ENCODE measurements at regions of chr15 and their contacts with region 1.

Region 1: DNA sequence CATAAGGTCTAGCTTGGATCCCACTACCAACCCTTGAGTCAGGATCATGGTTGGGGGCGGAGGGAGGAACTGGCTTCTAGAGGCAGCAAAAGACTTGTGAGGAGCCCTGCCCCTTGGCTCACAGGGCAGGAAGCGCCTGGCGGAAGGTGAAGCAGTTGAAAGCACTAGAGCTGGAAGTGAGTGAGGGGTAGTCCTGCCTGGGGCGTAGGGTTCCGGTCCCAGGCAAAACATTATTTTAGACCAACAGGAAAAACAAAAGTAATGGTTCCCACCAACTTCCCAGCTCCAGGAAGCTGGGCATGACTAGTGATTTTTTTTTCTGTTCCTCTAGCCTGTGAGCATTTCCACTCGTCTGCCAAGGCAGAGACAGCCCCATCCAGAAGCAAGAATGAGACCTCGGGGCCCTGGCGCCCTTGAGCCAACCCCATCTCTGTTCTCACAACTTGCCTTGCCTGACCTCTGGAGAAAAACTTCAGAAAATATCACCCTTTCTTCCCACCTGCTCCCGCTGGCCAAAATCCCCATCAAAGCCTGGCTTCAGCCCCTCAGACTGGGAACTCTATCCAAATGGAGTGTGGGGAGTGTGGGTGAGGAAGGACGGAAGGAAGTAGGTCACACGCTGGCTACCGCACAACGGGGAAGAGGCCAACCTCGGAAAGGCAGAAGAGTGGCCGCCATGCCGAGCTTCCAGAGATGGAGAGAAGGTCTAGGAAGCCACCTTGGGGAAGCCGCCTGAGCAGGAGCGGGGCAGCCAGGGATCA is 57.5 kb downstream of the RBPMS2 start:
- DNase-seq: peak; percentile 26
- ATAC-seq: no peak
- H3K4me3 Mint-ChIP-seq: no peak overlapping the region
- H3K27ac Mint-ChIP-seq: peak overlapping the region; percentile 15
- H3K4me1 Mint-ChIP-seq: peaks cover 21% of the 10 kb centered on the region
- H3K27me3 Mint-ChIP-seq: no peaks in the 10 kb centered on the region
- CTCF ChIP-seq: no peak

Region 2: GRCh38 chr15:64640146-64640871 is 77.6 kb before region 1 on chr15:
- CTCF ChIA-PET with region 1: no interaction called
- POLR2A ChIA-PET with region 1: no interaction called
- intact Hi-C with region 1: no loop called
- DNase-seq: no peak
- ATAC-seq: no peak
- H3K4me3 Mint-ChIP-seq: no peak overlapping the region
- H3K27ac Mint-ChIP-seq: no peak overlapping the region
- H3K4me1 Mint-ChIP-seq: peaks cover 55% of the 10 kb centered on the region
- H3K27me3 Mint-ChIP-seq: no peaks in the 10 kb centered on the region
- CTCF ChIP-seq: no peak

Region 3: GRCh38 chr15:64681424-64682024 is 36.4 kb before region 1 on chr15:
- CTCF ChIA-PET with region 1: interaction called, 16 read pairs
- POLR2A ChIA-PET with region 1: no interaction called
- intact Hi-C with region 1: no loop called
- DNase-seq: peak; percentile 24
- ATAC-seq: peak; percentile 65
- H3K4me3 Mint-ChIP-seq: no peak overlapping the region
- H3K27ac Mint-ChIP-seq: peak overlapping the region; percentile 34
- H3K4me1 Mint-ChIP-seq: peaks cover 4% of the 10 kb centered on the region
- H3K27me3 Mint-ChIP-seq: no peaks in the 10 kb centered on the region
- CTCF ChIP-seq: peak; percentile 40

Region 4: DNA sequence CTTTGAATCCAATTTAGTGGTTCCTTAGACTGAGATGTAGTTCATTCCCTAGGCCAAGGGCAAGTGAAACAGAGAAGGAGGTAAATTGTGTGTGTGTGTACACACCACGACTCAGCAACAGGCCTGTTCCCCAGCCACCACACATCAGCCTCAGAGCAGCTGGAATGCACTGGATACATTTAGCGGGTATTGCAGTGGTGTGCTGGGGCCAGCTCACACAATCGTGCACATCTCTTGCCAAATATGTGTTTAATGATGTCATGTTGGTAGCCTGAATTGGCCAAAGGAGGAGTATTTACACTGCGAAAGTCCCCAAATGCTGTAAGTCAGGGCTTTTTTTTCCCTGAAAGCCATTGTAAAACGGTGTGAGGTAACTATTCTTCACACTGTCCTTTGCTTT is 24.8 kb before region 1 on chr15:
- CTCF ChIA-PET with region 1: interaction called, 16 read pairs
- POLR2A ChIA-PET with region 1: interaction called, 5 read pairs
- intact Hi-C with region 1: no loop called
- DNase-seq: no peak
- ATAC-seq: no peak
- H3K4me3 Mint-ChIP-seq: no peak overlapping the region
- H3K27ac Mint-ChIP-seq: peak overlapping the region; percentile 13
- H3K4me1 Mint-ChIP-seq: peaks cover 23% of the 10 kb centered on the region
- H3K27me3 Mint-ChIP-seq: no peaks in the 10 kb centered on the region
- CTCF ChIP-seq: no peak

Region 5: DNA sequence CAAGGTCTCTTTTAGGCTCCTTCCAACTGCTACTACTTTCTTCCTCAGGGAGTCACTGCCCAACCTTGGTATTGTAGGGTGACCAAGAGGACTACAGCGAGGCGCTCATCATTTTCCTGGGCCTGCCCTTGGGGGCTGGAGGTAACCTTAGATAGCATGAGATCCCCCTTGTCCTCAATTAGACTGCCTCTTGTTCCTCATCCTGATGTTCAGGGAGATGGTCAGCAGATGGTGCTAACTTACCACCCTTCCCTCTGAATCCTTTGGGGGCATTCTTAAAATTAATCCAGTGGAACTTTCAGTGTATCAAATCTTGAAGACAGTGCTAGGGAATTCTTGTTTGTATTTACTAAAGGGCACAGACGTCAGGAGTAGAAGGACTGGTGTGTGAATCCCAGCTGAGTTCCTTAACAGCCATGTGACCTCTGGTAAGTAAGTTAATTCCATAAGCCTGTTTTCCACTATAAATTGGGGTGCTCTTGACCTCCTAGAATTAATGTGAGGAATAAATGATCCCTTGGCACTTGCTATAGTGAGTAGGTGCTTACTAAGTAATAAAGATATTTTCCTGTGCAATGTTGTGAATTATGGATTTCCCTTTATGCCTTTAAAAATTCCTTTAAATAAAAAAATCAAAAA is 471.3 kb after region 1 on chr15:
- CTCF ChIA-PET with region 1: no interaction called
- POLR2A ChIA-PET with region 1: no interaction called
- intact Hi-C with region 1: no loop called
- DNase-seq: peak; percentile 58
- ATAC-seq: no peak
- H3K4me3 Mint-ChIP-seq: no peak overlapping the region
- H3K27ac Mint-ChIP-seq: no peak overlapping the region
- H3K4me1 Mint-ChIP-seq: peaks cover 5% of the 10 kb centered on the region
- H3K27me3 Mint-ChIP-seq: no peaks in the 10 kb centered on the region
- CTCF ChIP-seq: peak; percentile 67

Measured in activated CD8-positive, alpha-beta T cell treated with anti-CD3 and anti-CD28 coated beads for 36 hours (primary cell).